ENCODE measurements at regions of chr6 and their contacts with region 1.

Region 1: GRCh38 chr6:142146828-142147662 is at the starts of genes NMBR and VTA1:
- DNase-seq: peak; percentile 92 to 100 (median 94)
- ATAC-seq: peak; percentile 100
- H3K4me3 ChIP-seq: peak within 1 kb of the TSS; percentile 78
- H3K27ac ChIP-seq: peak within 1 kb of the TSS; percentile 71
- H3K4me1 ChIP-seq: no peaks in the 10 kb centered on the region; a peak in 1 of 5 replicates
- H3K27me3 ChIP-seq: no peaks in the 10 kb centered on the region
- CTCF ChIP-seq: peak; percentile 90 to 97 (median 96)
- EP300 ChIP-seq: peak; percentile 83
- POLR2A ChIP-seq: peak; percentile 94
- RAD21 ChIP-seq: peak; percentile 87 to 90
- polyA plus RNA-seq, gene NMBR: not detected
- polyA plus RNA-seq, gene VTA1: 163 to 182 TPM

Region 2: DNA sequence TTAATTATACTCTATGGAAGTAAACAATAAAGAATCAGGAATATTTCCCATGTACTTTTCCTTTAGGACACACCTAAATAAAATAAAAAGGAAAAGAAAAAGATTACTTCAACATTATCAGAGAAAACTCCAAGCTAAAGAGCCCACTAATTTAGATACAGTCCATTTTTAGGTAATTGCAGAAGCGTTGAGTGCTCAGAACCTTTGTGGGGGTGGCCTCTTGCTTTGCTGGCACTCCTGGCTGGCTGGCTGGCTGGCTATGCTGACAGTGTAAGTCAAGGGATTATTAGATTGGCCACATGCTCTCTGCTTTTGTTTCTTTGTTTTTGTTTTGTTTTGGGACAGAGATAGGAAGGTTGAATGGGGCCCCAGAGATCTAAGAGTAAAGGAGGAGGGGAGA is 14.4 kb before region 1 on chr6 and contains the start of gene GJE1:
- CTCF ChIA-PET with region 1: no interaction called
- POLR2A ChIA-PET with region 1: no interaction called
- in situ Hi-C with region 1: no loop called
- intact Hi-C with region 1: no loop called
- DNase-seq: no peak
- ATAC-seq: no peak
- H3K4me3 ChIP-seq: no peak within 1 kb of the TSS
- H3K27ac ChIP-seq: no peak within 1 kb of the TSS
- H3K4me1 ChIP-seq: no peaks in the 10 kb centered on the region
- H3K27me3 ChIP-seq: no peaks in the 10 kb centered on the region; a peak in 1 of 5 replicates
- CTCF ChIP-seq: no peak
- EP300 ChIP-seq: no peak
- POLR2A ChIP-seq: no peak
- RAD21 ChIP-seq: no peak
- polyA plus RNA-seq, gene GJE1: not detected

Region 3: GRCh38 chr6:142207265-142207877 is 60.3 kb after region 1 on chr6:
- CTCF ChIA-PET with region 1: interaction called, 6 read pairs
- POLR2A ChIA-PET with region 1: no interaction called
- in situ Hi-C with region 1: no loop called
- intact Hi-C with region 1: loop called (anchors 1 kb)
- DNase-seq: peak; percentile 42 to 68 (median 50)
- ATAC-seq: peak; percentile 96
- H3K4me3 ChIP-seq: no peak overlapping the region
- H3K27ac ChIP-seq: no peak overlapping the region
- H3K4me1 ChIP-seq: no peaks in the 10 kb centered on the region
- H3K27me3 ChIP-seq: no peaks in the 10 kb centered on the region
- CTCF ChIP-seq: peak; percentile 76 to 80 (median 78)
- EP300 ChIP-seq: no peak
- POLR2A ChIP-seq: no peak
- RAD21 ChIP-seq: peak in 1 of 2 experiments; percentile 70; a peak in 2 of 4 replicates

Region 4: GRCh38 chr6:142537612-142538478 is 390.8 kb after region 1 on chr6:
- CTCF ChIA-PET with region 1: interaction called, 3 read pairs
- POLR2A ChIA-PET with region 1: no interaction called
- in situ Hi-C with region 1: no loop called
- intact Hi-C with region 1: loop called (anchors 1 kb)
- DNase-seq: peak; percentile 56 to 73 (median 65)
- ATAC-seq: peak; percentile 94
- H3K4me3 ChIP-seq: peak overlapping the region; percentile 5; the same call in 1 of the 2 replicates
- H3K27ac ChIP-seq: no peak overlapping the region
- H3K4me1 ChIP-seq: no peaks in the 10 kb centered on the region; a peak in 1 of 5 replicates
- H3K27me3 ChIP-seq: peaks cover 3 to 7% of the 10 kb centered on the region in 2 experiments; a peak in 2 of 5 replicates
- CTCF ChIP-seq: peak; percentile 82 to 93 (median 83)
- EP300 ChIP-seq: no peak
- POLR2A ChIP-seq: no peak
- RAD21 ChIP-seq: peak; percentile 66 to 79

Measured in K562 (cell line).